Activated CD8-positive, alpha-beta T cell treated with anti-CD3 and anti-CD28 coated beads, Interleukin-2, amount 10 ng/mL, durations not matched to agents 7 days and 5 days (primary cell): ENCODE measurements at regions of chr14 and their contacts with region 1.

Region 1: GRCh38 chr14:60184146-60184904 is 19.1 kb upstream of the DHRS7 start:
- DNase-seq: peak; percentile 63
- ATAC-seq: peak; percentile 79
- H3K4me3 Mint-ChIP-seq: peak overlapping the region; percentile 69
- H3K27ac Mint-ChIP-seq: peak overlapping the region; percentile 70
- H3K4me1 Mint-ChIP-seq: peaks cover 13% of the 10 kb centered on the region
- H3K27me3 Mint-ChIP-seq: peaks cover 2% of the 10 kb centered on the region

Region 2: GRCh38 chr14:59897761-59898383 is 286.5 kb before region 1 on chr14:
- CTCF ChIA-PET with region 1: interaction called, 10 read pairs
- POLR2A ChIA-PET with region 1: no interaction called
- DNase-seq: no peak
- ATAC-seq: no peak
- H3K4me3 Mint-ChIP-seq: no peak overlapping the region
- H3K27ac Mint-ChIP-seq: no peak overlapping the region
- H3K4me1 Mint-ChIP-seq: no peaks in the 10 kb centered on the region
- H3K27me3 Mint-ChIP-seq: peaks cover 11% of the 10 kb centered on the region

Region 3: GRCh38 chr14:60064491-60065072 is 119.7 kb before region 1 on chr14:
- CTCF ChIA-PET with region 1: interaction called, 81 read pairs
- POLR2A ChIA-PET with region 1: no interaction called
- DNase-seq: no peak
- ATAC-seq: peak; percentile 55
- H3K4me3 Mint-ChIP-seq: no peak overlapping the region
- H3K27ac Mint-ChIP-seq: no peak overlapping the region
- H3K4me1 Mint-ChIP-seq: no peaks in the 10 kb centered on the region
- H3K27me3 Mint-ChIP-seq: peaks cover 7% of the 10 kb centered on the region

Region 4: GRCh38 chr14:60164712-60165546 is 19.4 kb before region 1 on chr14 and contains the start of gene DHRS7:
- CTCF ChIA-PET with region 1: interaction called, 55 read pairs
- POLR2A ChIA-PET with region 1: interaction called, 3 read pairs
- DNase-seq: peak; percentile 76
- ATAC-seq: peak; percentile 92
- H3K4me3 Mint-ChIP-seq: peak within 1 kb of the TSS; percentile 98
- H3K27ac Mint-ChIP-seq: peak within 1 kb of the TSS; percentile 96
- H3K4me1 Mint-ChIP-seq: peaks cover 42% of the 10 kb centered on the region
- H3K27me3 Mint-ChIP-seq: peaks cover 6% of the 10 kb centered on the region
- total RNA-seq, gene DHRS7: 45.7 to 54.4 TPM

Region 5: GRCh38 chr14:60248697-60249318 is 64.5 kb after region 1 on chr14 and contains the start of gene PPM1A:
- CTCF ChIA-PET with region 1: interaction called, 19 read pairs
- POLR2A ChIA-PET with region 1: interaction called, 10 read pairs
- DNase-seq: peak; percentile 95
- ATAC-seq: peak; percentile 74
- H3K4me3 Mint-ChIP-seq: peak within 1 kb of the TSS; percentile 93
- H3K27ac Mint-ChIP-seq: peak within 1 kb of the TSS; percentile 100
- H3K4me1 Mint-ChIP-seq: peaks cover 56% of the 10 kb centered on the region
- H3K27me3 Mint-ChIP-seq: no peaks in the 10 kb centered on the region
- total RNA-seq, gene PPM1A: 45.2 to 50.1 TPM

Region 6: GRCh38 chr14:60294411-60295069 is 110.2 kb after region 1 on chr14:
- CTCF ChIA-PET with region 1: no interaction called
- POLR2A ChIA-PET with region 1: no interaction called
- DNase-seq: no peak
- ATAC-seq: no peak
- H3K4me3 Mint-ChIP-seq: no peak overlapping the region
- H3K27ac Mint-ChIP-seq: no peak overlapping the region
- H3K4me1 Mint-ChIP-seq: no peaks in the 10 kb centered on the region
- H3K27me3 Mint-ChIP-seq: no peaks in the 10 kb centered on the region